Heart right ventricle (tissue), 16 donors: ENCODE measurements at regions of chr4 and their contacts with region 1.

Region 1: DNA sequence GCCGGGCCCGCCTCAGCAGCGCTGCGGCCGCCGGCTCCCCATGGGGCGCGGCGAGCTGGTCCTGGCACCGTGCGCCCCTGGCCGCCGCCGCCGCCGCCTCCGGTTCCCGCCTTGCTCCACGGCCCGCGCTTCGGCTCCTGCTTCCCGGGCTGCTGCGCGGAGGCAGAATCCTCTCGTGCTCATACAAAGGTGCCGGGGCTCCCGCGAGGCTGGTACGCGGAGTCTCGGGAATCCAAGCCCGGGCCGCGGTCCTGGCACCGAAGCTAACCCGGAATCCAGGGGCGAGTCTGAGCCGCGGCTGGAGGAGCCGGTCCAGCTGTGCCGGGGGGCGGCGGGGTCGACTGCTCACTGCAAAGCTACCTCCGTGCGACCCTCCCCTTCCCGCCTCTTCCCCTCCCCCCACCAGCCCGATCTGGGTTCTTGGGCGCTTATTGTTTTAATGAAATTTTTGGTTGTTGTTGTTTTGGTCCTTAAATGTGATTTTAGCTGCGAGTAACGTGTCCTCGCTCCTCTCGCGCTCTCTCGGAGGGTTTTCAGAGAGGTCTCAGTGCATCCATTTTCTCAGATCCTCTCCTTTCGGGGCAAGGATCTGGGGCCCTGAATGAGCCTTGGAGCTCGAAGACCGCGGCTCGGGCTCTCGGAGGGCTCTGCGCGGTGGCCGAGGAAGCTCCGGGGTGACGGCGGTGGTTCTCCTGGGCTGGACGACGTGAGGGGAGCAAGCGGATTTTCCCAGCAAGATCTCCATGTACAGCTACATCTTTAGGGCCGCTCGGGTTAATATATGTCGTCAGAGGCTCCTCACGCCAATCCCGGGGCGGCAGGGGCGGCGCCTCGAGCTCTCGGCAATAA is at the start of gene HAND2:
- DNase-seq: peak; percentile 81 to 87
- ATAC-seq: peak; percentile 67 to 80 (median 75)
- H3K4me3 ChIP-seq: peak within 1 kb of the TSS; percentile 56 to 90 (median 74)
- H3K27ac ChIP-seq: peak within 1 kb of the TSS; percentile 89 to 97 (median 96)
- H3K4me1 ChIP-seq: peaks cover 0 to 20% (median 6%) of the 10 kb centered on the region in 9 donors
- H3K27me3 ChIP-seq: peaks cover 0 to 98% (median 50%) of the 10 kb centered on the region in 7 donors
- CTCF ChIP-seq: no peak
- total RNA-seq, gene HAND2: 64.6 to 196 (median 130) TPM

Region 2: GRCh38 chr4:173669460-173670179 is 139.9 kb after region 1 on chr4:
- intact Hi-C with region 1: loop called in 1 of 10 experiments (anchors 10 kb)
- DNase-seq: peak in 1 of 2 donors; percentile 38
- ATAC-seq: peak; percentile 88 to 99 (median 97)
- H3K4me3 ChIP-seq: no peak overlapping the region
- H3K27ac ChIP-seq: peak overlapping the region; percentile 47 to 89 (median 72)
- H3K4me1 ChIP-seq: peaks cover 0 to 9% (median 0%) of the 10 kb centered on the region in 9 donors
- H3K27me3 ChIP-seq: no peaks in the 10 kb centered on the region
- CTCF ChIP-seq: no peak

Region 3: GRCh38 chr4:173685165-173685830 is 155.6 kb after region 1 on chr4:
- intact Hi-C with region 1: loop called in 3 of 10 experiments (anchors 5 to 10 kb)
- DNase-seq: no peak
- ATAC-seq: no peak
- H3K4me3 ChIP-seq: no peak overlapping the region
- H3K27ac ChIP-seq: peak overlapping the region; percentile 43 to 89 (median 78)
- H3K4me1 ChIP-seq: peaks cover 0 to 39% (median 9%) of the 10 kb centered on the region in 9 donors
- H3K27me3 ChIP-seq: no peaks in the 10 kb centered on the region
- CTCF ChIP-seq: no peak

Region 4: GRCh38 chr4:173746424-173746823 is 216.7 kb after region 1 on chr4:
- intact Hi-C with region 1: loop called in 8 of 10 experiments (anchors 2 to 5 kb)
- DNase-seq: no peak
- ATAC-seq: peak; percentile 22 to 72 (median 60)
- H3K4me3 ChIP-seq: peak overlapping the region in 4 of 10 donors; percentile 2 to 11 (median 6)
- H3K27ac ChIP-seq: peak overlapping the region in 9 of 10 donors; percentile 30 to 86 (median 69)
- H3K4me1 ChIP-seq: peaks cover 0 to 20% (median 0%) of the 10 kb centered on the region in 9 donors
- H3K27me3 ChIP-seq: no peaks in the 10 kb centered on the region
- CTCF ChIP-seq: no peak

Region 5: GRCh38 chr4:173935622-173936405 is 406.1 kb after region 1 on chr4:
- intact Hi-C with region 1: loop called in 1 of 10 experiments (anchors 10 kb)
- DNase-seq: no peak
- ATAC-seq: no peak
- H3K4me3 ChIP-seq: no peak overlapping the region
- H3K27ac ChIP-seq: no peak overlapping the region
- H3K4me1 ChIP-seq: no peaks in the 10 kb centered on the region
- H3K27me3 ChIP-seq: peaks cover 0 to 3% (median 0%) of the 10 kb centered on the region in 7 donors
- CTCF ChIP-seq: no peak